ENCODE measurements at regions of chr1 and their contacts with region 1.

Region 1: GRCh38 chr1:84506002-84506728 is at the starts of genes GNG5 and SPATA1:
- DNase-seq: peak; percentile 99
- ATAC-seq: peak; percentile 94
- H3K4me3 Mint-ChIP-seq: peak within 1 kb of the TSS; percentile 100
- H3K27ac Mint-ChIP-seq: peak within 1 kb of the TSS; percentile 99
- H3K4me1 Mint-ChIP-seq: peaks cover 35% of the 10 kb centered on the region
- H3K27me3 Mint-ChIP-seq: no peaks in the 10 kb centered on the region
- total RNA-seq, gene GNG5: 99.0 to 106 TPM
- total RNA-seq, gene SPATA1: 3.3 to 3.4 TPM

Region 2: DNA sequence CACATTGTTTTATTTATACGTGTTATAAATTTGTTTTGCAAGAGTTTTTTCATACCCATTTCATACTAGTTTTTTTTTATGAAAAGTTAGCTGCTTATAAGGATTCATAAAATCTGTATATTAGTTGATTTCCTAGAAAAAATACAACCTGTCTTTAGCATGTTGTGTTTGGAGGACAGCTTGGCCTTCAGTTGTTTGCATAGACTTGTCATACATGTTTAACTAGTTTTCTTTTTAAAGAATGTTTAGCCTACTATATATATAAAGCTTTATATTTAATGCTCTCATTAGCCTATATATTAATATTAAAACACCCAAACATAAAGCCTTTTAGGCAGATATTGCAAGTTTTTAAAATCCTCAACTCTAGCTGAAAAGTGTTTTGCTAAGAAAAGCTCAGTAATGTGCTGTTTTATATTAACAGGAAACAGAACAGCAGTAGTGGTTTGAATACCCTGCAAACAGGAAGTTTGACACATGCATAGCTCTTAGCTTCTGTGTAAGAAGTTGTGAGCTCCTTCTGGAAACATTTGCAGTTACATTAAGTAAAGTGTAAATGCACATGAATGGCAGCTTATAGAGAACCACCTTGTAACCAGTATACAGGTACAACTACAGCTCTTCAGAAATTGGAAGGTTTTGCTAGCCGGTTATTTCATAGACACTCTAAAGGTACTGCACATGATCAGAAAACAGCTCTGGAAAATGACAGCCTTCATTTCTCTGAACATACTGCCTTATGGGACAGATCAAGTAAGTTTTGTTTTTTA is 362.2 kb before region 1 on chr1 and contains the start of gene PRKACB:
- CTCF ChIA-PET with region 1: interaction called, 6 read pairs
- POLR2A ChIA-PET with region 1: interaction called, 30 read pairs
- DNase-seq: peak; percentile 42
- ATAC-seq: peak; percentile 94
- H3K4me3 Mint-ChIP-seq: peak within 1 kb of the TSS; percentile 88
- H3K27ac Mint-ChIP-seq: peak within 1 kb of the TSS; percentile 95
- H3K4me1 Mint-ChIP-seq: peaks cover 27% of the 10 kb centered on the region
- H3K27me3 Mint-ChIP-seq: no peaks in the 10 kb centered on the region
- total RNA-seq, gene PRKACB: 85.2 to 96.3 TPM

Region 3: DNA sequence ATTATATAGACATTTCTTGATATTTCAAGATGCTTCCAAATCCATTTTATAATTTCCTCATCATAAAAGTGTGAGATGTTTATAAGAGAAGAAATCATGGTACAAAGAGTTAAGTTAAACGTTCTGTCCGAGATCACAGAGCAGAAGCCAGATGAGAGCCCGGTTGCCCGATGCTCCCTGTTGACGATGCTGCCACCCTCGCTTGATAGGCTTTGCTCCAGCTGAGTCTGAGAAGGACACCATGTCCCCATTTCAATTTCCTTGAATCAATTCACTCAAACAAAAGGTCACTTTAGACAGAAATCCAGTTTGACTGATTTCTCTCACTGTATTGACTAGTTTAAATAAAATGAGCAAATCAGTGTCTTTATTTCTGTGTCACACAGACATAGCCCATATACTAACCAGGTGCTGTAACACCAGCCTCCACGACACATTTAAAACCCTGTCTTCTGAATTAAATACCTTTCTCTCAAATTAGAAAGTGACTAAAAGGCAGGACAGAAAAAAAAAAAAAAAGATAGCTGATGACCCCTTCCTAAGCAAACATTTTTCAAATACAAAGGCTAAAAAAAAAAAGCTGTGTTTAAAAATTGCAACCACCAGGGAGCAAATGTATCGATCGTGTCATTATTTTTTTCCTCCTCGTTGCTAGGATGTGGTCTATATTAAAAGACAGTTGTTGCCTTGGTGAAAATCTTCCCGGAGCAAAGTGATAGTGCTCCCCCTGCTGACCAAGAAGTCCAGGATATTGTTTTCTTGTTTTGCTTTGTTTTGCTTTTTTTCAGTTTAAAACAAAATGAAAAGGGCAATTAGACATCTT is 72.7 kb before region 1 on chr1:
- CTCF ChIA-PET with region 1: interaction called, 6 read pairs
- POLR2A ChIA-PET with region 1: interaction called, 18 read pairs
- DNase-seq: peak; percentile 80
- ATAC-seq: peak; percentile 74
- H3K4me3 Mint-ChIP-seq: peak overlapping the region; percentile 66
- H3K27ac Mint-ChIP-seq: peak overlapping the region; percentile 58
- H3K4me1 Mint-ChIP-seq: peaks cover 10% of the 10 kb centered on the region
- H3K27me3 Mint-ChIP-seq: no peaks in the 10 kb centered on the region

Region 4: DNA sequence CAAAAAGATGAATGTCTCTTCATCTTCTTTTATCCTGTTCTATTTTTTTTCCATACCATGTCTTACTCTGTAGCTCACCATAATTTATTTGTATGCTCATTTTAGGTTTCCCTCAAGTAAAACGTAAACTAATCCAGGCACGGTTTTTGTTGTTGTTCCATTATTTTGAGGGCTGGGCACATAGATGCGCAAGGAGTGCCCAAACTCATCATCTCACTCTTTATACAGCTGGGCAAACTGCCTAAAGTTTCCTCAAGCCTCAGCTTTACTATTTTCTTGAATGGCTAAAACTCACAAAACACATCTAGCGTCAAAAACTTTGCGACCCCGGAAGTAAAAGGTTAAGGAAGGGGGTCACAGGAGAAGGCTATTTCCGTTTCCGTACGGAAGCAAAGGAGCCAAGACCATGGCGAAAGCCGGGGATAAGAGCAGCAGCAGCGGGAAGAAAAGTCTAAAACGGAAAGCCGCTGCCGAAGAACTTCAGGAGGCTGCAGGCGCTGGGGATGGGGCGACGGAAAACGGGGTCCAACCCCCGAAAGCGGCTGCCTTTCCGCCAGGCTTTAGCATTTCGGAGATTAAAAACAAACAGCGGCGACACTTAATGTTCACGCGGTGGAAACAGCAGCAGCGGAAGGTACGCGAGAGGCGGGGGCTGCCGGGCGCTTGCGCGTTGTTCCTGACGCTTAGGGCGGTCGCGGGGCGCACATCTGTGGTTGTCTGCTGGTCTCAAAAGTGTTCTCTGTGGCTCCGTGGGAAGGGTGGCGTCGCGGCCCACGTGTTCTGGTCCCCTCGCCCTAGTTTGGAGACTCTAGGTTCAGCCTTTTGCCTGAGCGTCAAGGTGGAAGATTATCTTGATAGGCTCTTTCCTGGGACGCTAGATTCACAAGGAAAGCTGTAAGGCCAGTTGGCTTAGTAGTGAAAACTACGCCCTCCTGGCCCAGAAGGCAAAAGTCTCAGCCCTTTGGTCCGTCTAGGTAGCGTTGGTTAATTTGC is 27.0 kb before region 1 on chr1 and contains the start of gene RPF1:
- CTCF ChIA-PET with region 1: interaction called, 11 read pairs
- POLR2A ChIA-PET with region 1: interaction called, 43 read pairs
- DNase-seq: peak; percentile 84
- ATAC-seq: peak; percentile 98
- H3K4me3 Mint-ChIP-seq: peak within 1 kb of the TSS; percentile 99
- H3K27ac Mint-ChIP-seq: peak within 1 kb of the TSS; percentile 99
- H3K4me1 Mint-ChIP-seq: peaks cover 32% of the 10 kb centered on the region
- H3K27me3 Mint-ChIP-seq: peaks cover 20% of the 10 kb centered on the region
- total RNA-seq, gene RPF1: 41.6 to 44.1 TPM

Region 5: GRCh38 chr1:84493747-84494146 is 12.4 kb before region 1 on chr1:
- CTCF ChIA-PET with region 1: no interaction called
- POLR2A ChIA-PET with region 1: interaction called, 10 read pairs
- DNase-seq: no peak
- ATAC-seq: no peak
- H3K4me3 Mint-ChIP-seq: no peak overlapping the region
- H3K27ac Mint-ChIP-seq: no peak overlapping the region
- H3K4me1 Mint-ChIP-seq: peaks cover 16% of the 10 kb centered on the region
- H3K27me3 Mint-ChIP-seq: no peaks in the 10 kb centered on the region

Region 6: DNA sequence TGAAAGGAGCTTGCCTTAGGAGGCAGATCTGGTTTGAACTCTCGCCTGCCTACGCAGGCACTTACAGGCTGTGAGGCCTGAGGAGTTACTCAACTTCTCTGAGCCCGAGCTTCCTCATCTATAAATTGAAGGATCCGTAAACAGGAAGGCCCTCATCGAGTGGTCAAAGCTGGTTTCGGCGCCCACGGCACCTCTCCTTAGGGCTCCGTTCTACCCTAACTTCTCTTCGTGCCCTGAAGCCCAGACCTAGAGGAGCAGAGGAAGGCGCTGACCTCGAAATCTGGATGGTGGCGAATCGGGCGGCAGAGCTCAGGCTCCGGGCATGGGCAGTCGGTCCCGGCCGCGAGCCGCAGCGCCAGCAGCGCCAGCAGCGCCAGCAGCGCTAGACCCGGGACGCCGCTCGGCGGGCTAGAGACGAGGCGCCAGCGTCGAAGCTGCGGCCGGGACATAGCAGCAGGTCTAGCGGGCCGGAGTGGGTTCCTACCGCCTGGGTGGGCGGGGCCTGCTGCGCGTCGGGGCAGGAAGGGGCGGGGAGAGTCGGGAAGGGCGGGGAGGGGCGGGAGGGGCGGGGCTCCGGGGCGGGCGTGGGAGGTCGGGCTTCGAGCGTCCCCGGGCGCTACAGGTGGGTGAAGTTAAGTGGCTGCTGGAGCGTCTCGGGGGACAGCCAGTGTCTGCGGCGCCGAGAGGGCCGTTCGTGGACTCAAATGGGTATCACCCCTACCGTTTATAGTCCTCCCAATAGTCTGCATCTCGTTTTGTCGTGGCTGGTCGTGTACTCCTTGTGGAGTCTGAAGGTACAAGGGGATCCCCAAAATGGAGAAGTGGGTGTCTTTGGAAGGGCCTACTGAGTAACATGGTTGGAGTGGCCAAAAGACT is 68.0 kb after region 1 on chr1 and contains the start of gene CTBS:
- CTCF ChIA-PET with region 1: interaction called, 10 read pairs
- POLR2A ChIA-PET with region 1: interaction called, 88 read pairs
- DNase-seq: peak; percentile 90
- ATAC-seq: peak; percentile 95
- H3K4me3 Mint-ChIP-seq: peak within 1 kb of the TSS; percentile 94
- H3K27ac Mint-ChIP-seq: peak within 1 kb of the TSS; percentile 99
- H3K4me1 Mint-ChIP-seq: peaks cover 33% of the 10 kb centered on the region
- H3K27me3 Mint-ChIP-seq: no peaks in the 10 kb centered on the region
- total RNA-seq, gene CTBS: 12.3 to 12.7 TPM

Region 7: GRCh38 chr1:84620720-84621313 is 114.7 kb after region 1 on chr1:
- CTCF ChIA-PET with region 1: interaction called, 27 read pairs
- POLR2A ChIA-PET with region 1: interaction called, 6 read pairs
- DNase-seq: peak; percentile 81
- ATAC-seq: peak; percentile 96
- H3K4me3 Mint-ChIP-seq: peak overlapping the region; percentile 84
- H3K27ac Mint-ChIP-seq: peak overlapping the region; percentile 83
- H3K4me1 Mint-ChIP-seq: peaks cover 13% of the 10 kb centered on the region
- H3K27me3 Mint-ChIP-seq: peaks cover 3% of the 10 kb centered on the region